Posterior vena cava (tissue), 2 donors: ENCODE measurements at regions of chr17 and their contacts with region 1.

Region 1: DNA sequence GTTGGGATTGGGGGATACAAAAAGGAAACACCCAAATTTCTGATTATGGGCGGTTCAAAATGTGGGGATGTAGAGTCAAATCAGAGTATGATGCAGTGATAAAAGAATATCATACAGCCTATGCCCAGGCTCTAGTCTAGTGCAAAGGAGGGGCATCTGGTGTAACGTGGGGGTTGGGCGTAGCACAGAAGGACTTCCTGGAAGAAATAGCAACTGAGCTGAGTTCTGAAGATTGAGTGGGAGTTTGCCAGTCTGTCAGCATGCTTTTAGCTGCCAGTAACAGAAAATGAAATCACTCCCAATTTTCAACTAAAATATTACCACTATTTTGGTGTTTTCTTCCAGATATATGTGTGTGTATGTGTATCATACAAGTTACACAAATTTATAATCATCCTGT is 196.9 kb downstream of the SPECC1 start:
- DNase-seq: no peak

Region 2: DNA sequence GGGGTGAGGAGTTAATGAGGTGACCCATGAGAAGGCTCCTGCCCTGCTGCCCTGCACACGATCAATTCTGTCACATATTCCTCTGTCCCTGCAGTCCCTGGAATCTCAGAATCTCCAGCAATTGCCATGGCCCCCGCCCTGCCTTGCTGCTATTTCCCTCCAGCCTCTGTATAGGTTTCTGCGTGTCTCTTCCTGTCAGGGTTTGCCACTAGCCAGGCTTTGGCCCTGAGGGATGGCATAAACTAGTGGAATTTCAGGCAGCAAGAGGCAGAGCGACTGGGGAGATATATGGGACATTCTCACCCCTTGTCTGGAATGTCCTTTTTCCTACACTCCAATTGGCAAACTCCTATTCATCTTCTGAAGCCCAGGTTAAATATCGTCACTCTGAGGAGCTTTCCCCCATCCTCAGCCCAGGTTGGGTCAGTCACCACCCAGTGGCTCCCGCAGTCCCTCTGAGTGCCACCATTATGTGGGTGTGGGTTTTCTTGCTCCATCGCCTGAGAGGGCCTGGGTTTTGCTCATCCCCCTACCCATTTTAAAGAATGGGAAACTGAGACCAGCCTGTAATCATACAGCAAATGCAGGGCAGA is 1062.6 kb after region 1 on chr17:
- intact Hi-C with region 1: loop called in 1 of 2 experiments (anchors 5 kb)
- DNase-seq: no peak